ENCODE measurements at regions of chr15 and their contacts with region 1.

Region 1: DNA sequence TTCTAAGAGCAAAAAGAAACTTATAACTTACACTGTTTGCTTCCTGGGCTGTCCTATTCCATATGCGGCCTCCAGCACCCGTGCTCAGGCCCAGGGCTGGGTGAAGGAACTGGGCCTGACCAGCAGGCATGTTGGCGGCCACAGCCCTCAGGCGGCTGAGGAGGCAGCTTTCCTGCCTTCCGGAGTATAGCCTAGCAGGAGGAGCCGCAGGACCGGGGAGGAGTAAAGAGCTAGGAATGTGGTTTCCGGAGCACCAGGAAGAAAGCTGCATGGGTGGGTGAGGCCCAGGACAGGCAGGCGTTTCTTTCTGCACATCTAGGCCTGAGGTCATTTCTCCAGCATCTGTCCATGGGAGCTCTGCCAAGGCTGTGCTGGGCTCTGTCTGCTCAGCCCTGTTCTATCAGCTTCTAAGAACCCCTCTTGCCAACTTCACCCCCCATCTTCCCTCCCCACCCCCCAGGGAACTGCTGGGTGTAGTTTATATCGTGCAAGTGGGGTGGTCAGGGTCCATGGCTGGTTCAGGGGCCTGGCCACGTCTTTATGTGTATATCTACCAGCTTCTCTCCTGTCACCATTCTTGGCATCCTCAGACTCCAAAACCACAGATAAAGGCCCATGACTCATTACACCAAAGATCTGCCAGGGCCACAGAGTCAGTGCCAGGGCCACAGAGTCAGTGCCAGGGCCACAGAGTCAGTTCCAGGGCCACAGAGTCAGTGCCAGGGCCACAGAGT is 7.8 kb upstream of the KIF7 start:
- DNase-seq: peak; percentile 90
- H3K4me3 Mint-ChIP-seq: peak overlapping the region; percentile 61
- H3K27ac Mint-ChIP-seq: peak overlapping the region; percentile 91
- H3K4me1 Mint-ChIP-seq: peaks cover 12% of the 10 kb centered on the region
- H3K27me3 Mint-ChIP-seq: no peaks in the 10 kb centered on the region
- CTCF ChIP-seq: no peak

Region 2: DNA sequence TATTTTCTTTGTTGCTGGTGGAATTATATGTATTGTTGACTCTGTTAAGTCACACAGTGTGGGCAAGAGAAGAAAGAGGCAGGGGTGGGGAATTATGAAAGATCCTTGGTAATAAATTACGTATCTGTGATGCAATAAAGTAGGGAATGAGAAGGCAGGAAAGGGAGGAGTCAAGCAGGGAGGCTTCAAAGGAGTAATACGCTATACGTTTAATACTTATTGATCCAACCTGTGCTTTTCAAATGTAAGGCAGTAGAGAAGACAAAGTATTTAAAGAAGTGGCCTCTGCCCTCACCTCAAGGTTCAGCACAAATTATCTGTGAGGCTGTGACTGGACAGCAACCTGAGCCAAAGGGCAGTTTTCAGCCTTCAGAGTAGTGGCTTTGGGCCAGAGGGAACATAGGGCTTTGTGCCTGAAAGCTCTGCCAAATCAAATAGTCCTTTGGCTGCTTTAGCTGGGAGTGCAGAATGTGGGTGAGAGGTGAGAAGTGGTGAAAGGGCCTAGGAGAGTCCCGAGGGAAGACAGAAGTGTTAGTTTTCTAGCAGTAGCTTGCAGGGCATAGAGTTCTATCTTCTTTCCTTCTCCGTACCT is 17.3 kb after region 1 on chr15:
- CTCF ChIA-PET with region 1: interaction called, 6 read pairs
- POLR2A ChIA-PET with region 1: interaction called, 11 read pairs
- intact Hi-C with region 1: no loop called
- DNase-seq: peak; percentile 94
- H3K4me3 Mint-ChIP-seq: peak overlapping the region; percentile 3
- H3K27ac Mint-ChIP-seq: peak overlapping the region; percentile 70
- H3K4me1 Mint-ChIP-seq: peaks cover 22% of the 10 kb centered on the region
- H3K27me3 Mint-ChIP-seq: no peaks in the 10 kb centered on the region
- CTCF ChIP-seq: no peak

Region 3: DNA sequence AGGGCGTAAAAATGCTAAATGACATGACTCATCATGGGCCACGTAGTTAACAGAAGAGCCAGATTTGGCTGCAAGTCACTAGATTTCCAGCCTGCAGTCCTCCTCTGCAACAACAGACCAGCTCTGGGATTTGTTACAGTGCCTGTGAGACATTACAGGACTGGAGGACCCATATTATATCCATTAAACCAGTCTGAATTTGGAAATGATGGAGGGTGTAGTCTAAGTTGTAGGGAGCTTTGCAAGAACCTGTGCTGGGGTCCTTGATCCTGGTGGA is 699.8 kb after region 1 on chr15:
- CTCF ChIA-PET with region 1: no interaction called
- POLR2A ChIA-PET with region 1: no interaction called
- intact Hi-C with region 1: no loop called
- DNase-seq: peak; percentile 67
- H3K4me3 Mint-ChIP-seq: peak overlapping the region; percentile 57
- H3K27ac Mint-ChIP-seq: peak overlapping the region; percentile 90
- H3K4me1 Mint-ChIP-seq: peaks cover 38% of the 10 kb centered on the region
- H3K27me3 Mint-ChIP-seq: no peaks in the 10 kb centered on the region
- CTCF ChIP-seq: no peak